Activated CD4-positive, alpha-beta memory T cell treated with anti-CD3 and anti-CD28 coated beads, Interleukin-2, amount 10 ng/mL, durations not matched to agents 7 days and 5 days (primary cell): ENCODE measurements at regions of chr7 and their contacts with region 1.

Region 1: DNA sequence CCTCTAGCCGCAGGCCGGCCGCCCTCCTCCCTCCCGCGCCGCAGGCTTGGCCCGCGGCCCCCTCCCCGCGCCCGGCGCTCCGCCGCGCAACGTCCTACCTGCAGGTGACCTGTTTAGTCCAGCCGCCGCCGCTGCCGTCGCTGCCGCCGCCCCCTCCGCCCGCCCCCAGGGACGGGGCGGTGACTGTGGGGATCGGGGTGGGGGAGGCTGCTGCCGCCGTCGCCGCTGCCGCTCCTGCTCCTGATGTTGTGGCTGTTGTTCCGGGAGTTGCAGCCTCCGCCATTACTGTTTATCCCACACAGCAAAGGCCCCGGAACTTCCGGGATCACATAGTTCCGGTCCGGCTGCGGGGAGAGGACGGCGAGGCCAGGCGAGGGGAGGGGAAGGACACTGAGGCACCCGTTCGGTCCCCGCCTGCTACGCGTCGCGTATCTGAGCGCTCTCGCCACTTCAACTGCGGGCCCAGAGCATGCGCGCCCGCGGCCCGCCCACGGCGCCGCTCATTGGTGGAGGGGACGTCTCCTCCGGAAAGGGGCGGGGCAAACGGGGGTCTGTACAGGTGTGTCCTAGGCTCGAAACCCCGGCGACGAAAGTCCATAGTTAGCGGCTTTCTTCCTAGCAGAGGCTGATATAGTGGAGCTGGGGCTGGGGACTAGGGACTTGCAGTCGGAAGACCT is at the start of gene MKRN1:
- DNase-seq: peak; percentile 94
- H3K4me3 Mint-ChIP-seq: peak within 1 kb of the TSS; percentile 96
- H3K27ac Mint-ChIP-seq: peak within 1 kb of the TSS; percentile 89
- H3K4me1 Mint-ChIP-seq: peaks cover 25% of the 10 kb centered on the region
- H3K27me3 Mint-ChIP-seq: no peaks in the 10 kb centered on the region
- total RNA-seq, gene MKRN1: 119 to 122 TPM

Region 2: GRCh38 chr7:140062528-140063299 is 416.5 kb before region 1 on chr7 and contains the start of gene PARP12:
- CTCF ChIA-PET with region 1: no interaction called
- POLR2A ChIA-PET with region 1: interaction called, 10 read pairs
- DNase-seq: peak; percentile 93
- H3K4me3 Mint-ChIP-seq: peak within 1 kb of the TSS; percentile 80
- H3K27ac Mint-ChIP-seq: peak within 1 kb of the TSS; percentile 82
- H3K4me1 Mint-ChIP-seq: peaks cover 48% of the 10 kb centered on the region
- H3K27me3 Mint-ChIP-seq: peaks cover 5% of the 10 kb centered on the region
- total RNA-seq, gene PARP12: 146 to 151 TPM

Region 3: GRCh38 chr7:140220181-140220522 is 259.0 kb before region 1 on chr7:
- CTCF ChIA-PET with region 1: no interaction called
- POLR2A ChIA-PET with region 1: no interaction called
- DNase-seq: no peak
- H3K4me3 Mint-ChIP-seq: no peak overlapping the region
- H3K27ac Mint-ChIP-seq: no peak overlapping the region
- H3K4me1 Mint-ChIP-seq: peaks cover 34% of the 10 kb centered on the region
- H3K27me3 Mint-ChIP-seq: no peaks in the 10 kb centered on the region

Region 4: DNA sequence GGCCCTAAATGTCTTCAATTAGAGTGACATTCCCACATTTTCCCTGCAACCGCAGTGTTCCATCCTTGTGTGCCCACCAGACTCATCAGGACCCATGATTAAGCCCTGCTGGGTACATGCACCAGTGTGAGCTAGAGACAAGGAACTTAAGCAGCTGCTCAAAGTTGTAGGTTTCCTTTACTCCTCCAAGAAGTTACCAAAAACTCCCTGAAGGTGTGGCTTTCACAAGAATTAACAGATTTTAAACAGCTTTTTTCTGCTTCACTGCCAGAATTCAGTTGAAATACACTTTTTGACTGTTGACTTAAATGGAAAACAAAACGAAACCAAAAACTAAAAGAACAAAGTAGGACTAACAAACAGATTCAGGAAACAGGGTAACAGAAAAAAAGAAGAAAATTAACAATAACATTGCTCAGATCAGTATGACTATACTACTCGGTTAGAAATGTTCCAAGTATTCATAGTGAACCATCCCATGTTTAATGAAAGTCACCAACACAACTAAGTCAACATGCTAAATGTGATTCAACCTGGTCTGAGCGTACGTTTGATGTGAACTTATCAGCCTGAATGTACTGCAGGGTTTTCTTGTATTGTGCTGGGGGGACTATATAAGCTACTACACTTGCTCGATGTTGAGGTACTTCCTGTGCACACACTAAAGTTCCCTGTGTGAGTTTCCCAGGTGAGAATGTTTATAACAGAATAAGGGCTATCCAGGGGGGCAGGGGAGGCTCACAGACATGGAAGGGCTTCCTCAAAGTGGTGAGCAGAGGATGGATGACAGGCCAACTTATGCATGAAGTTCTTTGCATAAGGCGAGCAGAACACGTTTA is 103.1 kb before region 1 on chr7:
- CTCF ChIA-PET with region 1: no interaction called
- POLR2A ChIA-PET with region 1: interaction called, 42 read pairs
- DNase-seq: peak; percentile 33
- H3K4me3 Mint-ChIP-seq: peak overlapping the region; percentile 77
- H3K27ac Mint-ChIP-seq: peak overlapping the region; percentile 99
- H3K4me1 Mint-ChIP-seq: peaks cover 47% of the 10 kb centered on the region
- H3K27me3 Mint-ChIP-seq: no peaks in the 10 kb centered on the region

Region 5: GRCh38 chr7:140494867-140495266 is 15.7 kb after region 1 on chr7:
- CTCF ChIA-PET with region 1: interaction called, 102 read pairs
- POLR2A ChIA-PET with region 1: interaction called, 16 read pairs
- DNase-seq: no peak
- H3K4me3 Mint-ChIP-seq: no peak overlapping the region
- H3K27ac Mint-ChIP-seq: no peak overlapping the region
- H3K4me1 Mint-ChIP-seq: peaks cover 2% of the 10 kb centered on the region
- H3K27me3 Mint-ChIP-seq: no peaks in the 10 kb centered on the region

Region 6: GRCh38 chr7:140673063-140673773 is 194.0 kb after region 1 on chr7:
- CTCF ChIA-PET with region 1: interaction called, 7 read pairs
- POLR2A ChIA-PET with region 1: interaction called, 19 read pairs
- DNase-seq: peak; percentile 63
- H3K4me3 Mint-ChIP-seq: peak overlapping the region; percentile 80
- H3K27ac Mint-ChIP-seq: peak overlapping the region; percentile 75
- H3K4me1 Mint-ChIP-seq: peaks cover 34% of the 10 kb centered on the region
- H3K27me3 Mint-ChIP-seq: peaks cover 2% of the 10 kb centered on the region